ENCODE measurements at regions of chr15 and their contacts with region 1.

Region 1: GRCh38 chr15:64046347-64047153 is at the start of gene DAPK2:
- DNase-seq: no peak
- H3K4me3 ChIP-seq: peak within 1 kb of the TSS; percentile 57
- H3K27me3 ChIP-seq: no peaks in the 10 kb centered on the region
- CTCF ChIP-seq: peak; percentile 71
- polyA plus RNA-seq, gene DAPK2: 10.5 and 12.4 TPM in 2 replicates

Region 2: DNA sequence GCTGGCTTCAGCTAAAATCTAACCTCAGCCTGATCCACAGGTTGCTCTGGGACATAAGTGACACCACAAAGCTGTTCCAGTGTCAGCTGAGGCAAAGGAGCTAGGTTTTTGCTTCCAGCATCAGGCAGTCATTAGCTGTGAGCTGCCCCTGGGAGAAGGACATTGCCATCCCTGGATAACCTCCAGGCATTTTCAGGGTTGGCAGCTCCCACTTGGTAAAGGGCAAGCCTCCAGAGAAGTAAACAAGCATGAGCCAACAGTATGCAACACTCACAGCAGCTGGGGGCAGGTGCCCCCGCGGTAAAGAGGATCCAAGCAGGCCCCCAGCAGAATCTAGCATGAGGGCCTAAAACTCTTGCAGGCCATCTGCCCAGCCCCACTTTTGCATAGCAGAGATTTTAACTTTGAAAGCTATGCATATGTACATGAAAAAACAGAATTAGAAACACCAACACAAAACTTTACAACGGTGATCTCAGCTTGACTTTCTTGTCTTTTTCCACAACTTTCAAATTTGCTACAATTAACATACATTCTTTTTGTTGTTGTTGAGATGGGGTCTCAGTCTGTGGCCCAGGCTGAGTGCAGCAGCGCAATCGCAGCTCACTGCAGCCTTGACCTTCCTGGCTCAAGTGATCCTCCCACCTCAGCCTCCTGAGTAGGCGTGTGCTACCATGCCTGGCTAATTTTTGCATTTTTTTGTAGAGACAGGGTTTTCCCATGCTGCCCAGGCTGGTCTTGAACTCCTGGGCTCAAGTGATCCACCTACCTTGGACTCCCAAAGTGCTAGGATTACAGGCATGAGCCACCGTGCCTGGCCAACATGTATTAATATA is 1087.8 kb before region 1 on chr15:
- CTCF ChIA-PET with region 1: no interaction called
- POLR2A ChIA-PET with region 1: no interaction called
- DNase-seq: no peak
- H3K4me3 ChIP-seq: no peak overlapping the region
- H3K27me3 ChIP-seq: no peaks in the 10 kb centered on the region
- CTCF ChIP-seq: no peak

Region 3: GRCh38 chr15:63531586-63531985 is 515.0 kb before region 1 on chr15:
- CTCF ChIA-PET with region 1: no interaction called
- POLR2A ChIA-PET with region 1: no interaction called
- DNase-seq: no peak
- H3K4me3 ChIP-seq: no peak overlapping the region
- H3K27me3 ChIP-seq: no peaks in the 10 kb centered on the region
- CTCF ChIP-seq: peak; percentile 14; the same call in 1 of the 2 replicates

Region 4: DNA sequence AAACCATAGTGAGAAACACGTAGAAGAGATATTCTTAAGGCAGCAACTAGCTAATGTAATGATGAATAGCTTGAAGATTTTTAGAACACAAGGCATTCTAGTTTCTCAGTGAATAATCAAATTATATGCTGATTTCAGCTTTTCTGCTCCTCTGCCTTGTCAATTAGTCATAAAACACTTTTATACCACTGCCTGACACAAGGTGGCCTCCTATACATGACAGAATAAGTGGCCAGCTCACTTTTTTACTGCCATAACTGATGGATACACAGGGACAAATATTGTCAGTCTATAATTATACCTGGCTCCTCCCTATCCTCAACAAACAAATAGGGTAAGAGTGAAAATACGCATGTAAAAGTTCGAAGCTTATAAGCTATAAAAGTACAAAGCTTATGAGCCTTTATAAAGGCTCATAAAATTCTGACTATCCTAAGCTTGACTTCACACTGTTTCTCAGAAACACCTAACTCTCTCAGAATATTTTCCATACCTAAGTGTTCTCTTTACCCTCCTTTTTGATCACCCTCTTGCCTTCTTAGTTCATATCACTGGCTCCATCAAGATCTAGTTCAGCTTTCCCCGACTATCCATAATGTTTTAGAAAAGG is 294.4 kb before region 1 on chr15:
- CTCF ChIA-PET with region 1: interaction called, 17 read pairs
- POLR2A ChIA-PET with region 1: no interaction called
- DNase-seq: no peak
- H3K4me3 ChIP-seq: no peak overlapping the region
- H3K27me3 ChIP-seq: no peaks in the 10 kb centered on the region
- CTCF ChIP-seq: peak; percentile 70

Region 5: DNA sequence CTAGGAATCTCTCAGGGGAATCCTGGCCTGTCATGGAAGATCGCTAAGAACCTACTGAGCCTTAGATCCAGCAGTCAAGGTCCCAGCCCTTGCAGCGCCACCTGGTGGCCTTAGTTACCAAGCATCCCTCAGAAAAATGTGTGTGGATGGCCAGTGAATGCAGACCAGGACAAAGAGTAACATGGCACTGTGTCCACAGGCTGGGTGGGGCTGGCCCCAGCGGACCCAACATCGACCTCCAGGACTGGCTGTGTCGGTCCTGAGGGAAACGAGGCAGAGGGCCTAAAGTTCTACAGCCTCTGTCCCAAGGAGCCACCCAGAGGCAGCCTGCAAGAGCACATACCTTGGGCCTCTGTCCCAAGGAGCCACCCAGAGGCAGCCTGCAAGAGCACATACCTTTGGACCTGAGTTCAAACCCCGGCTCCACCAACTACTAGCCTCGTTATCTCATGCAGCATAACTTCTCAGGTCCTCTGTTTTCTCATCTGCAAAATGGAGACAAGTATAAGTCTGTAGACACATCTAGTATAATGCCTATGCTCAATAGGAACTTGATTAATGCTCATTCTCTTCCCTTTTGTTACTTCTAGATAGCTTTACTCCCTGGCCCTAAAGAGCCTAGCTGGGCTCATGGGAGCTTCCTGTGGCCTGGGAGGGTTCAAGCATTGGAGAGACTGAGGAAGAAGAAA is 155.3 kb before region 1 on chr15:
- CTCF ChIA-PET with region 1: interaction called, 12 read pairs
- POLR2A ChIA-PET with region 1: no interaction called
- DNase-seq: no peak
- H3K4me3 ChIP-seq: no peak overlapping the region
- H3K27me3 ChIP-seq: no peaks in the 10 kb centered on the region
- CTCF ChIP-seq: peak; percentile 87

Region 6: DNA sequence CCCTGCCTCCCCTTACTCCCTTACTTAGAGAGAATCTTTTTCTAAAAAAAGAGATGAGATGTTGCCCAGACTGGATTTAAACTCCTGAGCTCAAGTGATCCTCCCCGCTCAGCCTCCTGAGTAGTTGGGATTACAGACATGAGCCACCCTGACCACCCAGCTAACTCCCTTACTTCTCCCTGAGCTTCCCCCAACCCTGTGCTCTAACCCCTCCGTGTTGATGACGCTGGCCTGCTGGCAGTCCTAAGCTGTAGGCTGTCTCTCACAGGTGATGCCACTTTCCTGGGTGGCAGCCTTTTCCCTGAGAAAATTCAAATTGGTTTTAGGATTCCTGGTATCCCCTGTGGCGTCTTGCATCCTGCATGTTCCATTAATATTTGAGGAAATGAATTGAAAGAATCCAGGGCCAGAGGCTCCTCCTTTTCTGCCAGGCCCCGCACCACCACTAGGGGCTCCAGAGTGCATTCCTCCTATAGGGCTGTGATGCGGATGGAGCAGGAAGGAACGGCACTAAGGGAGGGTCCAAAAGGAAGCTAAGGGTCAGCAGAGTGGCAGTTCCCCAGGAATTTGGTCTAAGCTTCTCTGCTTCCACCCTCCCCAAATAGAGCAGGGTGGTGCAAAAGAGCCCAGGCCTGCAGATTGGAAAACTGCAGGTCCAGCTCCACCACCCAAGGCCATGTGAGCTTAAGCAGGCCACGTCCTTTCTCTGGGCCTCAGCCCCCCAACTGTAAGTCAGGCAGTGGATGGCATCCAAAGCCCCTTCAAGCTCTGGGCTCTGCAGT is 101.4 kb before region 1 on chr15:
- CTCF ChIA-PET with region 1: interaction called, 17 read pairs
- POLR2A ChIA-PET with region 1: no interaction called
- DNase-seq: no peak
- H3K4me3 ChIP-seq: no peak overlapping the region
- H3K27me3 ChIP-seq: no peaks in the 10 kb centered on the region
- CTCF ChIP-seq: peak; percentile 94

Region 7: DNA sequence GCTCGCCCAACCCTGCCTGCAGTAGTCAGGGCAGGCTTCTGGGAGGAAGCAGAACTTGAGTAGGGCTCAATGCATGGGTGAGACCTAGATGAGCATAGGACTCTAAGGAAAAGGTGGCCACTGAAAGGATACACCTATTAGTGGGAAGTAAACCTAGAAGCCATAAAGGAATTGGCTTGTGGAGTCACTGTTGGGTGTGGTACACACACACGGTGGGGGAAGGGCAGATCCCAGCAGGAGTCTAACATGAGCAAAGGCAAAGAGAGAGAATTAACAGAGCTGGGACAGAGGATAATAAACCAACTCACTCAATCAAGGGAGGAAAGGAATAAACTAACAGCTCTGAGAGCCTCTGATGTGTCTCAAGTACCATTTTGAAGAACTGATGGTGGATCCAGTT is 23.3 kb before region 1 on chr15:
- CTCF ChIA-PET with region 1: interaction called, 14 read pairs
- POLR2A ChIA-PET with region 1: no interaction called
- DNase-seq: no peak
- H3K4me3 ChIP-seq: no peak overlapping the region
- H3K27me3 ChIP-seq: no peaks in the 10 kb centered on the region
- CTCF ChIP-seq: no peak

Region 8: DNA sequence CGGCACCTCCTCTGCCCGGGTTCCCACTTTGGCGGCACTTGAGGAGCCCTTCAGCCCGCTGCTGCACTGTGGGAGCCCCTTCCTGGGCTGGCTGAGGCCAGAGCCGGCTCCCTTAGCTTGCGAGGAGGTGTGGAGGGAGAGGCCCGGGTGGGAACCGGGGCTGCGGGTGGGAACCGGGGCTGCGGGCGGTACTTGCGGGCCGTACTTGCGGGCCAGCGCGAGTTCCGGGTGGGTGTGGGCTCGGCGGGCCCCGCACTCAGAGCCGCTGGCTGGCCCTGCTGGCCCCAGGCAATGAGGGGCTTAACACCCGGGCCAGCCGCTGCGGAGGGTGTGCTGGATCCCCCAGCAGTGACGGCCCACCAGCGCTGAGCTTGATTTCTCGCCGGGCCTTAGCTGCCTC is 14.2 kb after region 1 on chr15:
- CTCF ChIA-PET with region 1: interaction called, 13 read pairs
- POLR2A ChIA-PET with region 1: no interaction called
- DNase-seq: no peak
- H3K4me3 ChIP-seq: no peak overlapping the region
- H3K27me3 ChIP-seq: no peaks in the 10 kb centered on the region
- CTCF ChIP-seq: no peak

Region 9: GRCh38 chr15:64067564-64068030 is 21.0 kb after region 1 on chr15:
- CTCF ChIA-PET with region 1: interaction called, 12 read pairs
- POLR2A ChIA-PET with region 1: no interaction called
- DNase-seq: no peak
- H3K4me3 ChIP-seq: no peak overlapping the region
- H3K27me3 ChIP-seq: no peaks in the 10 kb centered on the region
- CTCF ChIP-seq: peak; percentile 78

Measured in BJ (cell line).